ENCODE measurements at regions of chr3 and their contacts with region 1.

Region 1: DNA sequence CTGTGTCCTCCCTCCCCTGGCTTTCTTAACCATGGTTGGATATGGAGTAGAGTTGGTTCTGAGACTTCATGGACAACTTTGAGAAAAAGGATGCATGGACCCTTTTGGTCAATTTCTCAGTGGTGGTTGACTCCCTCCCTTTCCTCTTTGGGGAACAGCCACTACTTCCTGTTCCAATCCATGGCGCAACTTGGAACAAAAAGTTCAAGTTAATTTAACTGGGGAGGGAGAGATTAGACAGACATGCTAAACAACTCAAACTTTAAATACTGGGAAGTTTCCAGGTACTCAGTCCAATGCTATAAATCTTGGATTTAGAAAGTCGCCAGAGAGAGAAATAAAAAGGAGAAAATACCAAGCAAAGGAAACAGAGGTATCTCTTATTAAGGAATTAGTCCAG is 202.2 kb downstream of the PDZRN3 start:
- DNase-seq: no peak
- H3K4me3 ChIP-seq: peak overlapping the region in 1 of 4 donors; percentile 8
- H3K27ac ChIP-seq: peak overlapping the region; percentile 70 to 81 (median 78)
- H3K4me1 ChIP-seq: peaks cover 0 to 88% (median 75%) of the 10 kb centered on the region in 4 donors
- H3K27me3 ChIP-seq: no peaks in the 10 kb centered on the region
- CTCF ChIP-seq: no peak
- EP300 ChIP-seq: peak; percentile 80 to 94 (median 90)
- POLR2A ChIP-seq: no peak

Region 2: DNA sequence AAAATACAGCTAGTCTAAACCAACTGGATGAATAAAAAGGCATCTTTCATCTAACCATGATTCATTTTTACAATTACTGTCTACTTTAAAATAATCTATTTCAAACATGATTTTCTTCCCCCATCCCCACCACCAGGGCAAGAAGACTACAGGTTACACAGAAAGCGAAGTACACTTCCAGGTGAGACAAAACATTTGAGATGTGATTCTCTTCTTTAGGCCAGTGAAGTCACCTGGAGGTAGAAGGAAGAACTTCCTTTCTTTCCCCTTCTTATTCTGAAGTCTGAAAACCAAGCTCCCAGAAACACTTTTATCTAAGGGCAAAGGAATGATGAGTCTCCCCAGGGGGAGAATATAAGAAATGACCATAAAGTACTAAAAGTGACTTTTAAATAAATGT is 611.0 kb before region 1 on chr3:
- intact Hi-C with region 1: no loop called
- DNase-seq: no peak
- H3K4me3 ChIP-seq: no peak overlapping the region
- H3K27ac ChIP-seq: no peak overlapping the region
- H3K4me1 ChIP-seq: peaks cover 0 to 16% (median 13%) of the 10 kb centered on the region in 4 donors
- H3K27me3 ChIP-seq: no peaks in the 10 kb centered on the region
- CTCF ChIP-seq: no peak
- EP300 ChIP-seq: no peak
- POLR2A ChIP-seq: no peak

Region 3: GRCh38 chr3:73365756-73366397 is 56.7 kb before region 1 on chr3:
- intact Hi-C with region 1: loop called (anchors 5 kb)
- DNase-seq: peak; percentile 94
- H3K4me3 ChIP-seq: peak overlapping the region in 1 of 4 donors; percentile 9
- H3K27ac ChIP-seq: peak overlapping the region; percentile 1 to 81 (median 68)
- H3K4me1 ChIP-seq: peaks cover 0 to 35% (median 21%) of the 10 kb centered on the region in 4 donors
- H3K27me3 ChIP-seq: no peaks in the 10 kb centered on the region
- CTCF ChIP-seq: no peak
- EP300 ChIP-seq: peak; percentile 35 to 73 (median 62)
- POLR2A ChIP-seq: no peak

Measured in sigmoid colon (tissue), 7 donors.